Cardiac septum (tissue), 1 donor: ENCODE measurements at regions of chr5 and their contacts with region 1.

Region 1: DNA sequence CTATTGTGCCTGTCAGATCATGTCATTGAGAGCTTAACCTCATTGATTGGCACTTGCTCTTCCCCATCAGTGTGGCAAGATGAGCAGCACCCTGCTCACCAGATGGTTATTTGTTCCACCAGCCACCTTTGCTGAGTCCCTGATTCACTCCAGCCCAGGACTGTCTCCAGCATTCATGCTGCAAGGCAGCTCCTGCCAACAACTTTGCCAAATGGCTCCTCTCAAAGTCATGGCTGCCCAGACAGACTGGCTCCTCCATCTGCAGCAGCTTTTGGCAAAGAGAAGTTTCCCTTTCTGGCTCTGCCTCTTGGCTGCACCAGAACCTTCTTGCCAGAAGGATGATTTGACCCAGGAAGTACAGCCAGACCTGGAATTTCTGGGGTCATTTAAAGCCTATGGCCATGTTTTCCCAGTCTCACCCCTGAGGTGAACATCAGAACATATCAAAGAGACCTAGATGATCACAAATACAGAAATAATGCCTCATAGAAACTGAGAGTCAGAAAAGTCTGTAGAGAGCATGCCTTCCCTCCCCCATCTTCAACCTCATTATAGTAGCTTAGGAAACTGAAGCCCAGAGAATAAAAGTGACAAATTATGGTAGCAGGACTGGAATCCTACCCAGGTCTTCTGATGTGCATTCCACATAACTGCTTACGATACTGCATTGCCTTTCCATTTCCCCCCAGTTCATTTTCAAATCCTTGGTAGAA is 10.4 kb downstream of the PPP2R2B start:
- DNase-seq: no peak

Region 2: DNA sequence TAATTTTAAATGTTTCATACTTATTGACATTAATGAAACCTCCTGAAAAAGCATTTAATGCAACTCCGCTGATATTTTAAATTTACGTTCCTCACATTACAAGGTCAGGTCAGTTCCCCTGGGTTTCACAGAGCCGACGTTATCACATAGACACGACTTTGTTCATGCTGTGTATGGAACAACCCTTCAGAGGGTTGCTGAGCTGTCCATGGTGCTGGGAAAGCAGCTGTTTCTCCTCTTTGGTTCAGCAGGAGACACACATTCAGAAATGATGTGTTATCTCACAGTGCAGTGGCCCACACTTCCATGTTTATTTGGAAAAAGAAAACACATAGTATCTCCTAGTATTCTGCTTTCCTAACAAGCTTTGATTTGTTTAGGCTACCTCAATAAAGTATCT is 43.1 kb before region 1 on chr5:
- intact Hi-C with region 1: loop called (anchors 5 kb)
- DNase-seq: no peak